ENCODE measurements at regions of chr2 and their contacts with region 1.

Region 1: DNA sequence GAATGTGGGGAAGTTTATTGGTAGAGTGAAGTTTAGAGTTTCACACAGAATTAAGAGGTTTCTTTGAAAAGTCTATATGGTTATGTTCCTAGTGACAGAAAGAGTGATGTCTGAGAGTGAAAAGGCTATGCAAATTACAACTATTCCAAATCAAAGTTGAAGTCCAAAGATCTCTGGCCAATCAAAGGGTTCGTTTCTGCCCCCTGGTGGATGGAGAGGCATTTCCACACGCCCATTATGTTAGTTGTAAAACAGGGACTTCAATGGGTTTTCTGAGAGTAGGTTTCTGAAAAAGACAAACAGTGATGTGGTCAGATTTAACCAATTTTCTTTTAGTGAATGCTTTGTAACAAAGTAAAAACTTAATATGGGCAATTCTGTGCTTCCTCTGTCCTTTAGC is 441.5 kb upstream of the POU3F3 start:
- DNase-seq: peak; percentile 41 to 52 (median 48)
- ATAC-seq: peak; percentile 74
- H3K4me3 ChIP-seq: no peak overlapping the region
- H3K27ac ChIP-seq: no peak overlapping the region
- H3K4me1 ChIP-seq: no peaks in the 10 kb centered on the region
- H3K27me3 ChIP-seq: no peaks in the 10 kb centered on the region
- CTCF ChIP-seq: peak; percentile 30 to 62 (median 57); a peak in 5 of 6 replicates
- EP300 ChIP-seq: no peak
- POLR2A ChIP-seq: no peak
- RAD21 ChIP-seq: peak; percentile 42 to 56

Region 2: GRCh38 chr2:103288708-103289414 is 1123.5 kb before region 1 on chr2:
- CTCF ChIA-PET with region 1: no interaction called
- POLR2A ChIA-PET with region 1: no interaction called
- in situ Hi-C with region 1: no loop called
- intact Hi-C with region 1: loop called (anchors 2 kb)
- DNase-seq: peak in 1 of 4 experiments; percentile 11
- ATAC-seq: 0 out of 3 replicates have a peak, but pooled peaks have one; percentile 28
- H3K4me3 ChIP-seq: no peak overlapping the region
- H3K27ac ChIP-seq: no peak overlapping the region
- H3K4me1 ChIP-seq: no peaks in the 10 kb centered on the region
- H3K27me3 ChIP-seq: no peaks in the 10 kb centered on the region
- CTCF ChIP-seq: peak in 2 of 3 experiments; percentile 22 to 31; a peak in 2 of 6 replicates
- EP300 ChIP-seq: no peak
- POLR2A ChIP-seq: no peak
- RAD21 ChIP-seq: peak; percentile 41 to 70

Measured in K562 (cell line).